ENCODE measurements at regions of chr2 and their contacts with region 1.

Region 1: GRCh38 chr2:237581751-237582746 is 8.5 kb downstream of the RAB17 start:
- DNase-seq: peak; percentile 89
- ATAC-seq: peak; percentile 98
- H3K4me3 Mint-ChIP-seq: no peak overlapping the region
- H3K27ac Mint-ChIP-seq: peak overlapping the region; percentile 79
- H3K4me1 Mint-ChIP-seq: peaks cover 8% of the 10 kb centered on the region
- H3K27me3 Mint-ChIP-seq: no peaks in the 10 kb centered on the region
- CTCF ChIP-seq: peak; percentile 67

Region 2: DNA sequence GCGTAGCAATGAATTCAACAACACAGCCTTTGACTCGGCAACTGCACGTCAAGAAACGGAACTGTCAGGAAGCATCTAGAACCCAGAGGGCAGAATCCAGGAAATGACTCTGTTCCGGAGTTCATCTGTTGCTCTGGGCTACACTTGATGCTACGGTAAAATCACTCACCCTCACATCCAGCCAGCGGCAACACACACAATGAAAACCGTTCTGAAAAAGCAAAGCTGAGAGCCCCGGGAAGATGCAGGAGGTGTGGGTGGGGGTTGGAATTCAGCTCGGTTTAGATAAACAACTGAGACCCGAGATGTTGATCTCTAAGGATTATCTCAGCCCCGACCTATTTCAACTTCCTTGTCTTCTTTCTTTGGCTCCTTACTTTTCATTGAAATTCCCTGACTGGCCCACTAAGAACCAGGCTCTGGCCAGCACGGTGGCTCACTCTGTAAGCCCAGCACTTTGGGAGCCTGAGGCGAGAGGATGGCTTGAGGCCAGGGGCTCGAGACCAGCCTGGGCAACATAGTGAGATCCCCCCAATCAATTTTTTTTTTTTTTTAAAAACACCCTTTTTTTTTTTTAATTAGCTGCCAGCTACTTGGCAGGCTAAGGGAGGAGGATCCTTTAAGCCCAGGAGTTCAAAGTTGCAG is 21.8 kb after region 1 on chr2:
- CTCF ChIA-PET with region 1: interaction called, 31 read pairs
- POLR2A ChIA-PET with region 1: interaction called, 4 read pairs
- intact Hi-C with region 1: no loop called
- DNase-seq: peak; percentile 62
- ATAC-seq: peak; percentile 98
- H3K4me3 Mint-ChIP-seq: peak overlapping the region; percentile 5
- H3K27ac Mint-ChIP-seq: peak overlapping the region; percentile 78
- H3K4me1 Mint-ChIP-seq: peaks cover 20% of the 10 kb centered on the region
- H3K27me3 Mint-ChIP-seq: no peaks in the 10 kb centered on the region
- CTCF ChIP-seq: no peak

Region 3: GRCh38 chr2:237708065-237708398 is 126.0 kb after region 1 on chr2:
- CTCF ChIA-PET with region 1: interaction called, 10 read pairs
- POLR2A ChIA-PET with region 1: interaction called, 3 read pairs
- intact Hi-C with region 1: no loop called
- DNase-seq: no peak
- ATAC-seq: no peak
- H3K4me3 Mint-ChIP-seq: no peak overlapping the region
- H3K27ac Mint-ChIP-seq: no peak overlapping the region
- H3K4me1 Mint-ChIP-seq: peaks cover 62% of the 10 kb centered on the region
- H3K27me3 Mint-ChIP-seq: no peaks in the 10 kb centered on the region
- CTCF ChIP-seq: no peak

Measured in activated CD8-positive, alpha-beta T cell treated with anti-CD3 and anti-CD28 coated beads for 36 hours (primary cell).